A673 (cell line): ENCODE measurements at regions of chr2 and their contacts with region 1.

Region 1: DNA sequence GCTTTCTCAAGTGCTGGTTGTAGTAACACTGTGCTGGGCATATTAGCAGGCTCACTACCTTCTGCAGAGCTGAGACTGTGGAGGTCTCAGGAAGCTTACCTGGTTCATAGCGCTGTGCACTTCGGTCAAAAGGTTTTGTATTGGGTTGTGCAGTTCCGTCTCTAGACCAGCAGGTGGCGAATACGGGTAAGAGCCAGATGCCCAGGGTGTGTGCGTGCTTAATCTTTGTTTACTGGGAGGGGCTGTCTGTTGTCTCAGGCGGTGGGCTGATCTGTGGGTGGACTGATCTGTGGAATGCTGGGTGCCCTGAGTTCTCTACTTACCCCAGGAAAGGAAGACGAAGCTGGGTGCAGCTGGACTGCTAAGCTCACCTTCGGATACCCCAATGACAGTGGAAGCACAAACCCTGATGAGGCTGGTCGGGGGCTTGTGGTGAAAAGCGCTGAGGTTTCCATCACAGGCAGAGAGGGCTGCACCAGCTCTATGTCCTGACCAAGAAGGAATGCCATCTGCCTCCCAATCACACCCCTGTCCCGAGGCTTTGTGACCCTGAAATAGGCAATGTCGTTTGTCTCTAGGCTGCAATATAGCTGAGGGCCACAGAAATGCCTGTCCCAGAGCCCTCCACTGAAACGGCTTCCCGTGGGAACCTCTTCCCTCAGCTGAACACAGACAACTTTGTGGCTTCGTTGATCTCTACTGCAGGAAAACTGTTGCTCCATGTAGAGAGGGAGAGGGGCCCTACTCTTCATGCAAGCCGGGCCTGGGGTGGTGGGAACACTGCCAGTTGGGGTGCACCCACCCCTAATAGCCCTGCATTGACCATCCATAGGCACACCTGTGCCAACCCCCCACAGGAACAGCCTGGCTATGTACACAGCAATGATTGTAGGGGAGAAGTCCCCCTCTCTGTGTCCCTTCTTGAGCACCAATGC is 45.9 kb upstream of the FAM117B start:
- DNase-seq: peak; percentile 83
- H3K4me3 ChIP-seq: no peak overlapping the region
- H3K27ac ChIP-seq: no peak overlapping the region
- H3K4me1 ChIP-seq: peaks cover 5% of the 10 kb centered on the region
- H3K27me3 ChIP-seq: no peaks in the 10 kb centered on the region
- CTCF ChIP-seq: peak; percentile 93

Region 2: DNA sequence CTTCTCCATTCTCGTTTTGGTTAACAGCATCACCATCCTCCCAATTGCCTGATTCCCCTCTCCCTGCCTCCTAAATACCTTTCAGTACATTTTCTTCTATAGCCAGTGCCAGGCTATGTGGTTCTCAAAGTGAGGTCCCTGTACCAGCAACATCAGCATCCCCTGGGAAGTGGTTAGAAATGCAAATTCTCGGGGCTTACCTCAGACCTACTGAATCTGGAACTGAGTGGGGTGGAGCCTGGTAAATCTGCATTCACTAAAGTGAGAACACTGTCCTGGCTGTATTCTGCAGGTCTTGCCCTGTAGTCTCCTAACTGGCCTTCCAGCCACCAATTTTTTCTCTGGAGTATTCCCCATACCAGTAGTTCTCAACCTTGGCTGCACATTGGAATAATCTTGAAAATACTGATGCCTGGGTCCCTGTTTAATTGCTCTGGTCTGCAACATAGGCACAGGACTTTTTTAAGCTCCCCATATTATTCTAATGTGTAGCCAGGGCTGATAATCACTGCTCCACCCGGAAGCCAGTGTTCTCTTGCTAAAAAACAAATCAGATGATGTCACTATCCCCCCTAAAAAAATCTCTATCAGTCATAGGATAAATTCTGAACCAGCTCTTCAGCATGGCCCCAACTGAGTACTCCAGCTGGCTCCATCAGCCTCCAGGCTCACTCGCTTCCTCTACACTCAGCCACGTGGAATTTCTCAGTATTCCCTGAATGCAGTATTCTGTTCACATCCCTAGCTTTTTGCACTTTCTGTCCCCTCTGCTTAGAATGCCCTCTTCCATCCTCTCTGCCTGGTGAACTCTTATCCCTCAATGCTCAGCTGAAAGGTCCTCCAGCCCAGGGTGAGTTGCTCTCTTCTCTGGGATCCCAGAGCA is 684.1 kb before region 1 on chr2:
- CTCF ChIA-PET with region 1: no interaction called
- POLR2A ChIA-PET with region 1: no interaction called
- intact Hi-C with region 1: no loop called
- DNase-seq: no peak
- H3K4me3 ChIP-seq: no peak overlapping the region
- H3K27ac ChIP-seq: no peak overlapping the region
- H3K4me1 ChIP-seq: no peaks in the 10 kb centered on the region
- H3K27me3 ChIP-seq: no peaks in the 10 kb centered on the region
- CTCF ChIP-seq: no peak

Region 3: GRCh38 chr2:202361108-202361507 is 227.8 kb before region 1 on chr2:
- CTCF ChIA-PET with region 1: no interaction called
- POLR2A ChIA-PET with region 1: no interaction called
- intact Hi-C with region 1: no loop called
- DNase-seq: no peak
- H3K4me3 ChIP-seq: no peak overlapping the region
- H3K27ac ChIP-seq: no peak overlapping the region
- H3K4me1 ChIP-seq: no peaks in the 10 kb centered on the region
- H3K27me3 ChIP-seq: no peaks in the 10 kb centered on the region
- CTCF ChIP-seq: no peak

Region 4: GRCh38 chr2:202560200-202560599 is 28.7 kb before region 1 on chr2:
- CTCF ChIA-PET with region 1: no interaction called
- POLR2A ChIA-PET with region 1: no interaction called
- intact Hi-C with region 1: no loop called
- DNase-seq: no peak
- H3K4me3 ChIP-seq: no peak overlapping the region
- H3K27ac ChIP-seq: no peak overlapping the region
- H3K4me1 ChIP-seq: peaks cover 13% of the 10 kb centered on the region
- H3K27me3 ChIP-seq: no peaks in the 10 kb centered on the region
- CTCF ChIP-seq: no peak

Region 5: GRCh38 chr2:202815548-202816360 is 226.8 kb after region 1 on chr2:
- CTCF ChIA-PET with region 1: no interaction called
- POLR2A ChIA-PET with region 1: no interaction called
- intact Hi-C with region 1: loop called (anchors 10 kb)
- DNase-seq: no peak
- H3K4me3 ChIP-seq: no peak overlapping the region
- H3K27ac ChIP-seq: no peak overlapping the region
- H3K4me1 ChIP-seq: no peaks in the 10 kb centered on the region
- H3K27me3 ChIP-seq: no peaks in the 10 kb centered on the region
- CTCF ChIP-seq: no peak

Region 6: DNA sequence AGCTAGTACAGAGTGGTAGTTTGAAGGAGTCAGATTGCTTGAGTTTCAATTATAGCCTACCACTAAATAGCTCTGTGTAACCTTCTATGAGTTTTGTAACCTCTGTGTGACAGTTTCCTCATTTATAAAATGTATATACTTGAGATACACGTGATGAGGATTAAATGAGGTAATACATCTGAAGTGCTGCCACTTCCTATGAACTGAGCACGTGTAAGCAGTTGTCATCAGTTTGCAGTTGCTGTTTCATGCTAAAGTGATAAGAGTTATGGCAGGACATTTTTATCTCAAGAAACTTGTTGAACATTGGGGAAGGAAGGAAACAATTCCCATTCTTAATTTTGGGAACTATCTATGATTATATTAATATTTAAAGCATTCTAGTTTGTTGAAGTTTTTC is 361.7 kb after region 1 on chr2:
- CTCF ChIA-PET with region 1: no interaction called
- POLR2A ChIA-PET with region 1: no interaction called
- intact Hi-C with region 1: no loop called
- DNase-seq: no peak
- H3K4me3 ChIP-seq: no peak overlapping the region
- H3K27ac ChIP-seq: no peak overlapping the region
- H3K4me1 ChIP-seq: no peaks in the 10 kb centered on the region
- H3K27me3 ChIP-seq: no peaks in the 10 kb centered on the region
- CTCF ChIP-seq: no peak

Region 7: DNA sequence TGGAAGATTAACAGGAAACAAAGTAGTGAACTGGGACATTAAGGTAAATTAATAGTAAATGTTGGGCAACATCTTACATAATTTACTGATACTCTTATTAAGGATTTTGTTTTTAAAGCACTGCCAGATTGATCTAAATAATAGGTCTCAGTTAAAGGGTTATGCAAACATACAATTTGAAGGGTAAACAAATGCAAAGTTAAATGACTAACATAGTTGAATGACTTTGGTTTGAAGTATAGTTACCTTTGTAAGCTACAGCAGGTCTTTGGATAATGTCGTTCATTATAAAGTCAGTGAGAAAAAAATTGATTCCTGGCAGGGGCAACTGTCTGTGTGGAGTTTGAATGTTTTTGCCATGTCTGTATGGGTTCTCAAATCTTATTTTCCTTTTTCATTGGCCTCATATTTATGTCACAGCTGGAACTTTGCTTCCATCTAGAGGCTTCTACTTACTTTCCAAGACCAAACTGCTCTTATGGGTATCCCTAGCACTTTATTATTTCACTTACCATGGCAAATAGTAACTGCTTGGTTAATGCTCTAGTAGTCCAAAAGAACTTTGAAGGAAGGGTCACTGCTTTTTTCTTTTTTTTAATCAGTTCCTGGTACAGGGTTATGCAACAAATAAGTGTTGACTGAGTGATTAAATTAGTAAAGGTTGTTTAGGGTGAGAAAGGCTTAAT is 533.5 kb after region 1 on chr2:
- CTCF ChIA-PET with region 1: no interaction called
- POLR2A ChIA-PET with region 1: no interaction called
- intact Hi-C with region 1: loop called (anchors 5 kb)
- DNase-seq: peak; percentile 27
- H3K4me3 ChIP-seq: no peak overlapping the region
- H3K27ac ChIP-seq: no peak overlapping the region
- H3K4me1 ChIP-seq: no peaks in the 10 kb centered on the region
- H3K27me3 ChIP-seq: no peaks in the 10 kb centered on the region
- CTCF ChIP-seq: peak; percentile 42; the same call in 1 of the 2 replicates

Region 8: DNA sequence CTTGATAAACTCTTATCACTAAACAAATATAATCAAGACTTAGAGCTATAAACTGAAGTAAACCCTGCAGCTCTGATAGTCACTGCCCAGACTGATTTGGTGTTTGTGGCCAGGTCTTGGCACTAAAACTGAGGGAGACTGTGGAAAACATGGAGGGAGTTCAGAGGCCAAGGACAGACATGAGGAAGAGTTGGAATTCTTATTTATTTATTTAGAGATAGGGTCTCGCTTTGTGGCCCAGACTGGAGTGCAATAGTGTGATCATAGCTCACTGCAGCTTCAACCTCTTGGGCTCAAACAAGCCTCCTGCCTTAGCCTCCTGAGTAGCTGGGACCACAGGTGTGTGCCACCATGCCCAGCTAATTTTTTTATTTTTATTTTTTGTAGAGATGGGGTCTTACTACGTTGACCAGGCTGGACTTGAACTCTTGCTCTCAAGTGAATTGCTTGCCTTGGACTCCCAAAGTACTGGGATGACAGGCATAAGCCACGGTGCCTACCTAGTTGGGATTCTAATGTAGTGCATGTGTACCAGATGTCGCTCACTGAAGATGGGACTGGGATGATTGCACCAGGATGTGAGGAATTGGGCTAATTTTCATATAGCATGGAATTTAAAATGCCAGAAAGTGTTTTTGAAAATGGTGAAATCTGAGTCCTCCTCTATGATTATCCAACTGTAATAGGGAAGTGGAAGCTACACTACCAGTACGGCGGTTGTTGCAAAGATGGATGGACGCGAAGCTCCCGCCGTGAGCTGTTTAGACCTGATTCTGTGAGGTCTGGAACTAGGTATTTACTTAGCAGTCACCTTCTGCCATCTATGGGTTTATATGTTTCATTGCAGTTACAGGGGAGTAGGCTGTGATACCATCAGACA is 1226.0 kb after region 1 on chr2:
- CTCF ChIA-PET with region 1: interaction called, 6 read pairs
- POLR2A ChIA-PET with region 1: no interaction called
- intact Hi-C with region 1: loop called (anchors 2 kb)
- DNase-seq: peak; percentile 76
- H3K4me3 ChIP-seq: no peak overlapping the region
- H3K27ac ChIP-seq: no peak overlapping the region
- H3K4me1 ChIP-seq: no peaks in the 10 kb centered on the region
- H3K27me3 ChIP-seq: no peaks in the 10 kb centered on the region
- CTCF ChIP-seq: peak; percentile 66